Panc1 (cell line): ENCODE measurements at regions of chr10 and their contacts with region 1.

Region 1: GRCh38 chr10:114684085-114684821 is 26.2 kb upstream of the ABLIM1 start:
- DNase-seq: no peak
- ATAC-seq: peak; percentile 74
- H3K4me3 ChIP-seq: peak overlapping the region; percentile 48 to 55
- H3K27ac ChIP-seq: peak overlapping the region; percentile 100
- H3K4me1 ChIP-seq: peaks cover 90% of the 10 kb centered on the region
- H3K27me3 ChIP-seq: no peaks in the 10 kb centered on the region
- CTCF ChIP-seq: no peak

Region 2: GRCh38 chr10:114391599-114391998 is 292.7 kb before region 1 on chr10:
- CTCF ChIA-PET with region 1: interaction called, 11 read pairs
- POLR2A ChIA-PET with region 1: no interaction called
- in situ Hi-C with region 1: no loop called
- intact Hi-C with region 1: no loop called
- DNase-seq: no peak
- ATAC-seq: no peak
- H3K4me3 ChIP-seq: no peak overlapping the region
- H3K27ac ChIP-seq: 0 out of 2 replicates have a peak overlapping the region, but pooled peaks have one; percentile 3
- H3K4me1 ChIP-seq: peaks cover 95% of the 10 kb centered on the region
- H3K27me3 ChIP-seq: no peaks in the 10 kb centered on the region
- CTCF ChIP-seq: no peak

Region 3: GRCh38 chr10:114970515-114970914 is 286.3 kb after region 1 on chr10:
- CTCF ChIA-PET with region 1: no interaction called
- POLR2A ChIA-PET with region 1: no interaction called
- in situ Hi-C with region 1: no loop called
- intact Hi-C with region 1: no loop called
- DNase-seq: no peak
- ATAC-seq: peak; percentile 69
- H3K4me3 ChIP-seq: no peak overlapping the region
- H3K27ac ChIP-seq: no peak overlapping the region
- H3K4me1 ChIP-seq: no peaks in the 10 kb centered on the region; the same call in 1 of the 2 replicates
- H3K27me3 ChIP-seq: no peaks in the 10 kb centered on the region
- CTCF ChIP-seq: no peak